MCF 10A (cell line): ENCODE measurements at regions of chr2 and their contacts with region 1.

Region 1: DNA sequence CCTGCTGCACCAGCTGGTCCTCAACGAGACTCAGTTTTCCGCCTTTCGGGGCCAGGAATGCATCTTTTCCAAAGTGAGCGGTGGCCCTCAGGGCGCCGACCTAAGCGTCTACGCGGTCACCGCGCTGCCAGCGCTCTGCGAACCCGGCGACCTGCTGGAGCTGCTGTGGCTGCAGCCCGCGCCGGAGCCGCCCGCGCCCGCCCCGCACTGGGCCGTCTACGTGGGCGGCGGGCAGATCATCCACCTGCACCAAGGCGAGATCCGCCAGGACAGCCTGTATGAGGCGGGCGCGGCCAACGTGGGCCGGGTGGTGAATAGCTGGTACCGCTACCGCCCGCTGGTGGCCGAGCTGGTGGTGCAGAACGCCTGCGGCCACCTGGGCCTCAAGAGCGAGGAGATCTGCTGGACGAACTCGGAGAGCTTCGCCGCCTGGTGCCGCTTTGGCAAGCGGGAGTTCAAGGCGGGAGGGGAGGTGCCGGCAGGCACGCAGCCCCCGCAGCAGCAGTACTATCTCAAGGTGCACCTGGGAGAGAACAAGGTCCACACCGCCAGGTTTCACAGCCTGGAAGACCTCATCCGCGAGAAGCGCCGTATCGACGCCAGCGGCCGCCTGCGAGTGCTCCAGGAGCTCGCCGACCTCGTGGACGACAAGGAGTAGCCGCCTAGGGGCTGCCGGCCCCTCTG is 1.8 kb downstream of the LRATD1 start:
- DNase-seq: peak; percentile 88
- H3K4me3 Mint-ChIP-seq: peak overlapping the region; percentile 75
- H3K27ac Mint-ChIP-seq: peak overlapping the region; percentile 88
- H3K4me1 Mint-ChIP-seq: peaks cover 15% of the 10 kb centered on the region
- H3K27me3 Mint-ChIP-seq: no peaks in the 10 kb centered on the region
- CTCF ChIP-seq: peak; percentile 72

Region 2: DNA sequence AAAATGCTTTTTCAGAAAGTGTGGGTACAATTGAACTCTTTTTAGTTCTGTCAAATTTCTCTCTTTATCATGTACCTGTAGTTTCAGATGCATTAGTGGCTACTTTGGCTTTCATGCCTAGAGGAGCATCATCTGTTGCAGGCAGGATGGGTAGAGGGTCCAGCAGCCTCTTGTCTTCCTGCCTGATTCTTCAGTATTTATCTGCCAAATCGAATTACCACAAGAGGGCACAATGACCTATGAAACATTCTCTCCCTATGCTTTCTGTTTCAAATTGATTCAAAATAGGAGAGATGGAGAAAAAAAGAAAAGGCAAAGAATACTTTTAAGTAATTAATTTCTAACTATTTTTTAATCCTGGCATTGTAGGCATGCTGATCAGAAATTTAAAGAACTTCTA is 1440.4 kb before region 1 on chr2:
- CTCF ChIA-PET with region 1: interaction called, 4 read pairs
- POLR2A ChIA-PET with region 1: no interaction called
- intact Hi-C with region 1: loop called (anchors 2 kb)
- DNase-seq: peak; percentile 55
- H3K4me3 Mint-ChIP-seq: no peak overlapping the region
- H3K27ac Mint-ChIP-seq: no peak overlapping the region
- H3K4me1 Mint-ChIP-seq: peaks cover 9% of the 10 kb centered on the region
- H3K27me3 Mint-ChIP-seq: no peaks in the 10 kb centered on the region
- CTCF ChIP-seq: peak; percentile 58

Region 3: DNA sequence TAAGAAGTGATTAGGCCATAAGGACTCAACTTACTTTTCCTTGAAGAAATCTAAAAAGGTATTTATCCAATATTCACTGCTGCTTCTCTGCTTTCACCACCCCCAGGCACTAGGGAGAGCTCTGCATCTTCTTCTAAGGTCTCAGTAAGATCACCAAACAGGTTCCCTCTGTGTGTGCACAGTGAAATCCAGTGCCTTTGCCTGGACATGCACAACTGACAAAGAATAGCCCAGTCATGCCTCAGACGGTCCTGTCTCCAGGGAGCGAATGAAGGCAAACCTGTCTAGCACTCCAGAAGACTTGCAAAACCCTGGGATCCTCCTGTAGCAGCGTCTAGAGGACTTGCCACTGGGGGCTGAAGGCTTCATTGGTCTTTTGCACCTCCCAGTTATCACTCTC is 346.3 kb before region 1 on chr2:
- CTCF ChIA-PET with region 1: interaction called, 4 read pairs
- POLR2A ChIA-PET with region 1: interaction called, 3 read pairs
- intact Hi-C with region 1: loop called (anchors 10 kb)
- DNase-seq: peak; percentile 63
- H3K4me3 Mint-ChIP-seq: no peak overlapping the region
- H3K27ac Mint-ChIP-seq: no peak overlapping the region
- H3K4me1 Mint-ChIP-seq: peaks cover 5% of the 10 kb centered on the region
- H3K27me3 Mint-ChIP-seq: no peaks in the 10 kb centered on the region
- CTCF ChIP-seq: no peak

Region 4: DNA sequence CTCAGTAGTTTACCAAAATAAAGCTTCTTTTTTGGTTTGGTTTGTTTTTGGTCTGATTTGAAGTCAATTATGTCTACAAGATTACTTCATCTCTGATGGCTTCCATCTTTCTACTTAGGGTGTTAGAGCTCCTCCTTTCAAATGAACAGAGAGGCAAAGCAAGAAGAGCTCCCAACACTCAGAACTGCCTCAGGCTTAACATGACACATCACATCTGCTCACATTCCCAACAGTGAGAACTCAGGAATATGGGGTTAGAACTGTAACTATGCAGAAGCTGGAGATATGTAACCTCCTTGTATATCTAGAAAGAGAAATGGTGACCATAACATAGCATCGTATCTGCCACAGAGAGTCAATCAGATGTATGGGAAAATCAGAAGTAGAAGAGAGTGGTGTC is 13.2 kb before region 1 on chr2:
- CTCF ChIA-PET with region 1: interaction called, 14 read pairs
- POLR2A ChIA-PET with region 1: interaction called, 3 read pairs
- intact Hi-C with region 1: no loop called
- DNase-seq: peak; percentile 43
- H3K4me3 Mint-ChIP-seq: no peak overlapping the region
- H3K27ac Mint-ChIP-seq: peak overlapping the region; percentile 8
- H3K4me1 Mint-ChIP-seq: peaks cover 6% of the 10 kb centered on the region
- H3K27me3 Mint-ChIP-seq: no peaks in the 10 kb centered on the region
- CTCF ChIP-seq: no peak

Region 5: GRCh38 chr2:14722904-14723570 is 88.7 kb after region 1 on chr2:
- CTCF ChIA-PET with region 1: no interaction called
- POLR2A ChIA-PET with region 1: no interaction called
- intact Hi-C with region 1: no loop called
- DNase-seq: no peak
- H3K4me3 Mint-ChIP-seq: no peak overlapping the region
- H3K27ac Mint-ChIP-seq: no peak overlapping the region
- H3K4me1 Mint-ChIP-seq: peaks cover 4% of the 10 kb centered on the region
- H3K27me3 Mint-ChIP-seq: no peaks in the 10 kb centered on the region
- CTCF ChIP-seq: no peak

Region 6: DNA sequence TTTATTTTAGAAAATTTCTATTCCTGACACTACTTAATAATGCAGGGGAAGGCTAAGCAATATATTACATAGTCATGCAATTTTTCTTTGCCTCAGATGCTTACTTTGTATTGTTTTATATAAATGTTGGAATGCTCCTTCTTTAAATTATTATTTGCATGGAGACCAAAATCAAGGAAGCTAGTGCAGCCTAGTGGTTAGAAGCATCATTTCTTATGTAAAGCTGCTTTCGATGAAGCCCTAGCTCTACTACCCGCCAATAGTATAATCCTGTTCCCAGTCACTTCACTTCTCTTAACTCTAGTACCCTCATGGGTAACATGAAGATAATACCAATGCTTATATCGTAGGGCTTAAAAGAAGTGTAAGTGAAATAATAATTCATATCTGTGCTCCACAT is 197.1 kb after region 1 on chr2:
- CTCF ChIA-PET with region 1: interaction called, 4 read pairs
- POLR2A ChIA-PET with region 1: no interaction called
- intact Hi-C with region 1: loop called (anchors 5 kb)
- DNase-seq: no peak
- H3K4me3 Mint-ChIP-seq: no peak overlapping the region
- H3K27ac Mint-ChIP-seq: no peak overlapping the region
- H3K4me1 Mint-ChIP-seq: no peaks in the 10 kb centered on the region
- H3K27me3 Mint-ChIP-seq: no peaks in the 10 kb centered on the region
- CTCF ChIP-seq: peak; percentile 16

Region 7: GRCh38 chr2:15159751-15160177 is 525.4 kb after region 1 on chr2:
- CTCF ChIA-PET with region 1: interaction called, 3 read pairs
- POLR2A ChIA-PET with region 1: no interaction called
- intact Hi-C with region 1: loop called (anchors 2 kb)
- DNase-seq: peak; percentile 64
- H3K4me3 Mint-ChIP-seq: no peak overlapping the region
- H3K27ac Mint-ChIP-seq: peak overlapping the region; percentile 6
- H3K4me1 Mint-ChIP-seq: peaks cover 6% of the 10 kb centered on the region
- H3K27me3 Mint-ChIP-seq: no peaks in the 10 kb centered on the region
- CTCF ChIP-seq: peak; percentile 47

Region 8: DNA sequence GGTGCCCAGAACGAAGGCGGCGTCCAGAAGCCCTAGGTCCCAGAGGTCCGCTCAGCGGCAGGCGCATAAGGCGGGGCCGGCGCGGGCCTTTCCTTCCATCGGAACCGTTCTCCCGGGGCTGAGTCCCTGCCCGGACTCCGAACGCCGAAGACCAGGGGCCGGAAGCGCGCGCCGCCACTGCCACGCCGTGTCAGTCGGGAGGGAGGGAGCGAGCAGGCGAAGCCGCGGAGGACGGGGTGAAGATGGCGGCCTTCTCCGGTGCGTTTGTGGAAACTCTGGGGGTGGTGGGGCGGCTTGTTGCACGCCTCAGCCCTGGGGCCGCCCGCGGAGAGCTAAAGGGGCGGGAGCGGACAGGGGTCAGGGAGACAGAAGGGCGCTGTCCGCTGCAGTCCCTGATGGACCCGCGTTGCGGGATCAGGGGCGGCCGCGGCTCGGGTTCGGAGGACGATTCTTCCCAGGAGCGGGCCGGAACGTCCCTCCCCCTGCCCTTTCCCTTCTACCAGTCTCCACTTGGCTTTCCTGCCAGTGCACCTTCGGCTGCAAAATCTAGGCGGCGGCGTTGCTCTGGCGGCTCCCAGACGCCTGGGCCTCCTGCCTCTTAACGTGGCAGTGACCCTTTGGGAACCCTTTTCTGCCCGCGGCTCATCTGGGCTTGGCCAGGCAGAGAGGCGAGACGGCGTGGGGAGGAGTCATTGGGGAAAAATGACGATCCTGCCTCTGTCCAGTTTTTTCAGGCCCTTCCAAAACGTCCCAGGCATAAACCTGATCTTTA is 957.5 kb after region 1 on chr2 and contains the start of gene DDX1:
- CTCF ChIA-PET with region 1: no interaction called
- POLR2A ChIA-PET with region 1: no interaction called
- intact Hi-C with region 1: loop called (anchors 1 kb)
- DNase-seq: peak; percentile 84
- H3K4me3 Mint-ChIP-seq: peak within 1 kb of the TSS; percentile 93
- H3K27ac Mint-ChIP-seq: peak within 1 kb of the TSS; percentile 99
- H3K4me1 Mint-ChIP-seq: peaks cover 11% of the 10 kb centered on the region
- H3K27me3 Mint-ChIP-seq: no peaks in the 10 kb centered on the region
- CTCF ChIP-seq: no peak
- total RNA-seq, gene DDX1: 97.8 and 119 TPM in 2 replicates